Activated T-helper 1 cell treated with anti-CD3 and anti-CD28 coated beads, Interleukin-12 subunit alpha, Interleukin-12 subunit beta, Interleukin-2, Interleukin-4 antibody, amounts not matched to agents 30 ng/mL and 10 ng/mL and 1 ng/mL, durations not matched to agents 14 hours and 24 hours and 36 hours (primary cell): ENCODE measurements at regions of chr14 and their contacts with region 1.

Region 1: DNA sequence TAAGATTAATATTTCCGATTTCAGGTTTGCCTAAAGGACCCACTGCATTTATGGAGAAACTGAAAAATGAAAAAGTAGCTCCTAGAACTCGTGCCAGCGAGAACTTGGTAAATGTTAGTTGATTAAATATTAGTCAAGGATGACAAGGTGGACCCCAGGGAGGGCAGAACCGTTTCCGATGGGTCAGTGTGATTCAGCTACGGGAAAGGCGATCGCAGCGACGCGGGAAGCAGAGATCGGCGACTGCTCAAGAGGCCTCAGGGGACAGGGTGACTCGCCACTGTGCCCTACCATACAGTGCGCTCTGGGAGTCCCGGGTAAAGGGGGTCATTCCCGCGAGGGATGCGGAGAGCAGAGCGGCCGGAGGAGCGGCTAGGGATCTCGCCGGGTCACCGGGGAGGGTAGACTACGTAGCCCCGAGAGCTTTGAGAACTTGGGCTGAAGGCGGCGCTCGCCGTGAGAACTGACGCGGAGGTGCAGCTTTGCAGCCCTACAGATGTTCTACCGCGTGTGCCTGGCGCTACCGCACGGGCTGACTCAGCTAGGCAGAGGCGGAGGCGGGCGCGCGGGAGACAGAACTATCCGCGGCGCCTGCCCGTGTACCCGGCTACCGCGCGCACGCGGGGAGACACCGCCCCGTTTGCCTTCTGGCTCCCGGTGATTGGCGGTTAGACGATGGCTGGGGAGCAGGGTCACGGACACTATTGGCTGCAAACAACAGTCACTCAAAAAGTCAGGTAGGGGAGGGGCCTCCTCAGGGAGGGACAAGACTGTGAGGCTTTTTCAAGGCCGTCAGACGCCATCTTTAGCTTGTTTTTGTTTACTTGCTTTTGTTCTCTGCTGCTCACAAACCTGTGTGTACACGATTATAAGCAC is 3.2 kb downstream of the C14orf93 start:
- DNase-seq: peak; percentile 98
- H3K4me3 Mint-ChIP-seq: peak overlapping the region; percentile 97
- H3K27ac Mint-ChIP-seq: peak overlapping the region; percentile 97
- H3K4me1 Mint-ChIP-seq: peaks cover 52% of the 10 kb centered on the region
- H3K27me3 Mint-ChIP-seq: no peaks in the 10 kb centered on the region

Region 2: GRCh38 chr14:22955702-22956569 is 50.8 kb before region 1 on chr14:
- intact Hi-C with region 1: loop called (anchors 2 kb)
- DNase-seq: no peak
- H3K4me3 Mint-ChIP-seq: peak overlapping the region; percentile 93
- H3K27ac Mint-ChIP-seq: peak overlapping the region; percentile 86
- H3K4me1 Mint-ChIP-seq: peaks cover 17% of the 10 kb centered on the region
- H3K27me3 Mint-ChIP-seq: peaks cover 3% of the 10 kb centered on the region

Region 3: GRCh38 chr14:23017091-23017490 is 10.3 kb after region 1 on chr14:
- intact Hi-C with region 1: no loop called
- DNase-seq: no peak
- H3K4me3 Mint-ChIP-seq: no peak overlapping the region
- H3K27ac Mint-ChIP-seq: no peak overlapping the region
- H3K4me1 Mint-ChIP-seq: peaks cover 13% of the 10 kb centered on the region
- H3K27me3 Mint-ChIP-seq: no peaks in the 10 kb centered on the region

Region 4: GRCh38 chr14:23028799-23029198 is 22.0 kb after region 1 on chr14:
- intact Hi-C with region 1: loop called (anchors 1 kb)
- DNase-seq: no peak
- H3K4me3 Mint-ChIP-seq: peak overlapping the region; percentile 28
- H3K27ac Mint-ChIP-seq: peak overlapping the region; percentile 40
- H3K4me1 Mint-ChIP-seq: peaks cover 59% of the 10 kb centered on the region
- H3K27me3 Mint-ChIP-seq: no peaks in the 10 kb centered on the region

Region 5: DNA sequence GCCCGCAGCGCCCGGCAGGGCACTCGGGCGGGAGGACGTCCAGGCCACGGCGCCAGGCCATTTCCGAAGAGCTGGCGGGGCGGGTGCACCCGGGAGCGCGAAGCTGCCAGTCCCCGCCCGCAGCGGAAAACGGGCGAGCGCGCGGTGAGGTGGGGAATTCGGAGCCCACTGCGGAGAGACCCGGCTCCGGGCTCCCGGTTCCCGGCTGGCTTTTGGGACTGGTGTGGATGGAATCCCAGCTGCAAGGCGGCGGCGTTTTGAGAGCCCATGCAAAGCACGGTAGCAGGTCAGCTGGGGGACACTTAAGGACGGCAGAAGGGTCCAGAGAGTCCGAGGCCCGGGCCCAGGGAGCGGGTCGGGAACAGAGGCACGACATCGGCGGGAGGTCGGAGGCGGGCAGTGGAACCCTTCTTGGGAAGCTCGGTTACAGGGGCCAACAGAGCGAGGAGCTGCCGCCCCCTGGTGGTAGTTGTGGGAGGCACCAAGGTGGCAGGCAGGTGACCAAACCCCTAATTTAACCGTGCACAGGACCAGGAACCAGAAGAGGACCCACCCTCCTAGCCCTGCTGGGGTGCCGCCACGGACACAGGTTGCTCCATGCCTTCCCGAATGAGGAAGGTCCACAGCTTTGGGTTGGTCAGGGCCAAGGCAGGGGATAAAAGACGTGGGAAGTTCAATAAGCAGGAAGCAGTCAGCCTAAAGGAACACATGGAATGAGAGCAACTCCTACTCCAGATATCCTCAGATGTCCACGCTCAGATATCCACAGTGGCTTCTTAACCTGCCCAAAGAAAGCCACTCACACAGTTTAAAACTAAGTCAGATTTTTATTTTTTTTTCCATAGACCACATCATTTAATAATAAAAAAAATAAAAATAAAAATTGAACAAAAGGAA is 51.2 kb after region 1 on chr14:
- intact Hi-C with region 1: loop called (anchors 1 kb)
- DNase-seq: peak; percentile 75
- H3K4me3 Mint-ChIP-seq: peak overlapping the region; percentile 86
- H3K27ac Mint-ChIP-seq: no peak overlapping the region
- H3K4me1 Mint-ChIP-seq: peaks cover 21% of the 10 kb centered on the region
- H3K27me3 Mint-ChIP-seq: peaks cover 8% of the 10 kb centered on the region

Region 6: DNA sequence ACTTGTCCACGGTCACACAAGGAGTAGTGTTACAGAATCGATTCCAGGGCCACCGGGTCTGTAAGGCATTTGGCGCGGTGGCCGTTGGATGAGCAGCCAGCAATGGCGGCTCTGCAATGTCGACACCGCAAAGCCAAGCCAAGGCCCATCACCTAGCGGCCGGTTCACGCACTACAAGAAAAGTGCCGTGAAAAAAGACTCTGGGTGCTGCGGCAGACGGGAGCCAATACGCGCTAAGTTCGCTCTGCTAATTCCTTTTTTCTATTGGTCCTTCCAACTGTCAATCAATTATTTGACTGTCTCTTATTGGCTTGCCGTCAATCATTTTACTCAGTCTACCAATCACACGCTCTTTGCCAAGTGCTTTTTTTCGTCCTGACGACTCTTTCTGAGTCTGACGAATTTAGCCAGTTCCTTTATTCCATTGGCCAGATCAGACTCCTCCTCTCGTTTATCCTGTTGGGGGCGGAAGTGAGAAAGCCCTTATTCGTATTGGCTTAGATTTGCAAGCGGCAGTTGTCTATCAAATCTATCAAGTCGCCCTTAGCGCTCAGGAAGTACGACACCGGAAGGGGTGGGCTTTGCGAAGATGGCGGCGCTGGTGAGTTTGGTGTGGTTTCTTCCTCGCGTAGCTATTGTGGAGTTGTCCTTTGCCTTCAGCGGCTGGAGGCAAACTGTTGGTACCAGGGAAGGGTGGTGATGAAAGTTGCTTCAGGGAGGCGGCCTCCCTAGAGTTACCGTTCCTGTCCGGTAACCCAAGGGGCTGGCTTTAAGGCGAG is 462.5 kb after region 1 on chr14 and contains the start of gene NGDN:
- intact Hi-C with region 1: loop called (anchors 1 kb)
- DNase-seq: peak; percentile 89
- H3K4me3 Mint-ChIP-seq: no peak within 1 kb of the TSS
- H3K27ac Mint-ChIP-seq: peak within 1 kb of the TSS; percentile 45
- H3K4me1 Mint-ChIP-seq: peaks cover 11% of the 10 kb centered on the region
- H3K27me3 Mint-ChIP-seq: peaks cover 2% of the 10 kb centered on the region
- total RNA-seq, gene NGDN: 80.1 and 84.5 TPM in 2 replicates